AG04449 (cell line): ENCODE measurements at regions of chr4 and their contacts with region 1.

Region 1: DNA sequence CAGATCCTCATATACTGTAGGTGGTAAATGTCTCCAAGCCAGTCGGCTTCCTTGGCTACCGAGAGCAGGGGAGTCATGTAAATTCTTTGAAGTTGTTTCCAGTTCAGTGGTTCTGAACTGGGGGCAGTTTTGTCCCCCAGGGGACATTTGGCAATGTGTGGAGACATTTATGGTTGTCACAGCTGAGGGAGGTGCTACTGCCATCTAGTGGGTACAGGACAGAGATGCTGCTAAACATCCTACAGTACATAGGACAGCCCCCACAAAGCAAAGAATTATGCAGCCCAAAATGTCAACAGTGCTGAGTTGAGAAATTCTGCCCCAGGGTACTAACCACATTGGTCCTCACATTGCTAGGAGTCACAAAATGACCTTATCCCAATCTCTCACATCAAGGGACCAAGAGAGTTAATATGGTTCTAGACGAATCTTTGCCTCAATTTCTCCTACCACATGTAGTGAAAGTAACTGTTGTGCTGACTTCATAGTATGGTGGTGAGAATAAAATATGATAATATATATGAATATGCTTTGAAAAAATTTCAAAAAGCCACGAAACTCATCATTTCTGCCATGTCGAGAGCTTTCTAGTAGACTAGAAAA is 104.4 kb upstream of the ARHGAP24 start:
- DNase-seq: no peak
- H3K4me3 ChIP-seq: no peak overlapping the region
- CTCF ChIP-seq: peak; percentile 77

Region 2: GRCh38 chr4:85381968-85382367 is 11.4 kb after region 1 on chr4:
- CTCF ChIA-PET with region 1: interaction called, 11 read pairs
- POLR2A ChIA-PET with region 1: no interaction called
- DNase-seq: no peak
- H3K4me3 ChIP-seq: no peak overlapping the region
- CTCF ChIP-seq: no peak

Region 3: GRCh38 chr4:85409251-85409650 is 38.7 kb after region 1 on chr4:
- CTCF ChIA-PET with region 1: no interaction called
- POLR2A ChIA-PET with region 1: no interaction called
- DNase-seq: no peak
- H3K4me3 ChIP-seq: no peak overlapping the region
- CTCF ChIP-seq: no peak